ENCODE measurements at regions of chr13 and their contacts with region 1.

Region 1: GRCh38 chr13:27783111-27783510 is 9.2 kb upstream of the GSX1 start:
- DNase-seq: no peak
- ATAC-seq: peak in 5 of 8 donors; percentile 52 to 68 (median 58)
- H3K4me3 ChIP-seq: no peak overlapping the region
- H3K27ac ChIP-seq: no peak overlapping the region
- H3K4me1 ChIP-seq: no peaks in the 10 kb centered on the region
- H3K27me3 ChIP-seq: peaks cover 0 to 79% (median 66%) of the 10 kb centered on the region in 7 donors
- CTCF ChIP-seq: peak in 8 of 9 donors; percentile 17 to 61 (median 48)

Region 2: DNA sequence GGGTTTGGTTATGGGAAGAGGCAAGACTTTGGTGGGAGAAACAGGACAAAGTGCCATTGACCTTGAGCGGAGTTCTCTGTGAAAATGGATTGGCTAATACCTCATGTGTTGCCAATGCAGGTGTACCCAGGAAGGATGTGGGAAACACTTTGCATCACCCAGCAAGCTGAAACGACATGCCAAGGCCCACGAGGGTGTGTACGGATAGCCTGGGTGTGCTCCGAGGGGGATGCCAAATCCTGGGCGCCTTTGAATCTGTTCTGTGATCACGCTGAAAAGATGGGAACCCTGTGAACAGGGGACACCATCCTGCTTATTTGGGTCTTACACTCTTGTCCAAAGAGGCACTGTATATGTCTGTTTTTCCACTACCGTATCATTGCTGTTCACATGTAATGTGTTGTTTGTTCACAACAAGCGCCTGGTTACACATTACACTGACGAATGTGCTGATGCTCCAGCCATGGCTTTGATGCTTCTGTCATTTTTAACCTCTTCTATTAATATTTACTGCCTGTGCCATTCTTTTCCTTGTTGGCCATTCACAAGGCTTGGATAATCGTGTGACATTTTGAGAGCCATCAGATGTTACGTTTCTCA is 350.4 kb before region 1 on chr13:
- intact Hi-C with region 1: no loop called
- DNase-seq: no peak
- ATAC-seq: no peak
- H3K4me3 ChIP-seq: no peak overlapping the region
- H3K27ac ChIP-seq: no peak overlapping the region
- H3K4me1 ChIP-seq: peaks cover 0 to 13% (median 4%) of the 10 kb centered on the region in 9 donors
- H3K27me3 ChIP-seq: no peaks in the 10 kb centered on the region
- CTCF ChIP-seq: no peak

Region 3: GRCh38 chr13:27665333-27665732 is 117.8 kb before region 1 on chr13:
- intact Hi-C with region 1: loop called in 3 of 10 experiments (anchors 5 to 10 kb)
- DNase-seq: no peak
- ATAC-seq: no peak
- H3K4me3 ChIP-seq: no peak overlapping the region
- H3K27ac ChIP-seq: no peak overlapping the region
- H3K4me1 ChIP-seq: peaks cover 0 to 49% (median 13%) of the 10 kb centered on the region in 9 donors
- H3K27me3 ChIP-seq: no peaks in the 10 kb centered on the region
- CTCF ChIP-seq: peak in 6 of 9 donors; percentile 10 to 45 (median 34)